ENCODE measurements at regions of chr16 and their contacts with region 1.

Region 1: DNA sequence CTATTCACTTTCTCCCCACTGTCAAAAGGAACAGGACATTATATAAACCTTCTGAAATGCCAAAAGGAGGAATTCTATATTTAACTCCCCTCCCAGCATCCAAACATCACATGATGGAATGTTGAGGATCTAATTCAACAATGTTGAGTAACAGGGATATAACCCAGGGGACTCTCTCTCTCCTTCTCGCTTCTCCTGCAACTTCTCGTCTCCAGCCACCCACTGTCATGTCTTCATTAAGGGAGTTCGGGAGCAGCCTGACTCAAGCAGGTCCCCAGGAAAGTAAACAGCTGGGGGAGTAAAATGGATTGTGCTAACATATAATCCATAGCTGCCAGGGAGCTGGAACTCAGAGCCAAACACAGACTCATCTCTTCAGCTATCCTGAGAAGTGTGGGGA is 51.7 kb downstream of the GRIN2A start:
- DNase-seq: no peak
- H3K4me3 ChIP-seq: no peak overlapping the region
- H3K27ac ChIP-seq: no peak overlapping the region
- H3K4me1 ChIP-seq: no peaks in the 10 kb centered on the region
- H3K27me3 ChIP-seq: peaks cover 6% of the 10 kb centered on the region
- CTCF ChIP-seq: no peak

Region 2: DNA sequence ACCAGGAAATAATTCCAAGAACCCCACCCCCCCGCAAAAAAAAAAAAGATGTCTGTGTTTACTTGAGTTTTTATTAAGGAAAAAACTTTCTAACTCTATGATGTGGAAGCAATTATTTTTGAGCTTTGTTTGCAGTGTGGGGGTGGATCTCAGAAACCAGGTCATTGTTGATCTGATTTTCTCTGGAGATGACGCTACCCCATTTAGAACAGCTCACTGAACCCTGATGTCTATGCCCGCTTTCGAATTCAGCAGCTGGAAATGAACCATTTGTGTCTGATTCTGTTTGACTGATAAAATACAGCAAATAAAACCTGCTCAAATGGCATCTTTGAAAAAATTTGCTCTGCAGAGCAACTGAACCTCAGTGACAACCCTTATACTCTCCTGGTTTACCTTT is 316.9 kb before region 1 on chr16:
- CTCF ChIA-PET with region 1: no interaction called
- POLR2A ChIA-PET with region 1: interaction called, 17 read pairs
- intact Hi-C with region 1: no loop called
- DNase-seq: no peak
- H3K4me3 ChIP-seq: no peak overlapping the region
- H3K27ac ChIP-seq: no peak overlapping the region
- H3K4me1 ChIP-seq: no peaks in the 10 kb centered on the region
- H3K27me3 ChIP-seq: no peaks in the 10 kb centered on the region
- CTCF ChIP-seq: no peak

Region 3: GRCh38 chr16:10107081-10107480 is 23.5 kb before region 1 on chr16:
- CTCF ChIA-PET with region 1: no interaction called
- POLR2A ChIA-PET with region 1: no interaction called
- intact Hi-C with region 1: no loop called
- DNase-seq: no peak
- H3K4me3 ChIP-seq: no peak overlapping the region
- H3K27ac ChIP-seq: no peak overlapping the region
- H3K4me1 ChIP-seq: no peaks in the 10 kb centered on the region
- H3K27me3 ChIP-seq: no peaks in the 10 kb centered on the region
- CTCF ChIP-seq: no peak